Endothelial cell of umbilical vein (primary cell): ENCODE measurements at regions of chr2 and their contacts with region 1.

Region 1: DNA sequence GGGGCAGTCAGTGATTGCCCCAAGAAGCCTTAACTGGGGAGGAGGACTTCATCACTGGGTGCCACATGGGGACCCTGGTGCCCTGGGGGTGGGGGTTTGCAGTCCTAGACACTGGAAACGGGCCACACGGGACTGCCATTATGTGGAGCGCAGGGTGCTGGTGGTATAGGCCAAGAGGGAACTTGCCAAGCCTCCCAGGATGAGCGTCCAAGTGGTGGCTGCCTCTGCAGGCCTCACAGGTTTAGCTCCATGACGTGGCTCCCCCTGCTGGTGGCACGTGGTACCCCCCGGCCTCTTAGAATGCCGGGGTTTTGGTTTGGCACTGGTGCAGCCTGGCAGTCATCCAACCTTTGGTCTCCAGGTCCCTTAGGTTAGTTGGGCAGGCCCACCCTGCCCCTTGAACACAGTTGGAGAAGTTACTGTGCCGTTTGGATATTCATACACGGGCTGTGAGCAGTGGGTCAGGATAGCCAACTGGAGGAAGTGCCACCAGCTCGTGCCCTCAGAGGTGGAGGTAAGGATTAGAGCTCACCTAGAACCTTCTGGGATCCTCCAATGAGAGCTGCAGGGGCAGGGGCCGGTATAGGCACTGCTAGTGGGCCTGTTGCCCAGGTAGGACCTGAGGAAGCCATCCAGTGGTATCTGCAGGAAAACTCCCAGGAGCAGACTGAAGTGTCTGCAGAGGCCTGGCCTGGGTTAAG is 5.6 kb downstream of the PTMA start:
- DNase-seq: peak; percentile 83
- H3K4me3 ChIP-seq: no peak overlapping the region
- H3K27ac ChIP-seq: peak overlapping the region; percentile 10
- H3K4me1 ChIP-seq: peaks cover 27% of the 10 kb centered on the region
- H3K27me3 ChIP-seq: no peaks in the 10 kb centered on the region
- CTCF ChIP-seq: peak; percentile 91 to 94
- POLR2A ChIP-seq: no peak

Region 2: GRCh38 chr2:231052494-231053451 is 661.1 kb before region 1 on chr2:
- CTCF ChIA-PET with region 1: no interaction called
- POLR2A ChIA-PET with region 1: no interaction called
- dilution Hi-C with region 1: no loop called
- intact Hi-C with region 1: no loop called
- DNase-seq: peak; percentile 74
- H3K4me3 ChIP-seq: peak overlapping the region; percentile 17 to 47 (median 36)
- H3K27ac ChIP-seq: no peak overlapping the region
- H3K4me1 ChIP-seq: peaks cover 6% of the 10 kb centered on the region
- H3K27me3 ChIP-seq: peaks cover 4 to 10% of the 10 kb centered on the region in 2 experiments
- CTCF ChIP-seq: peak; percentile 95
- POLR2A ChIP-seq: no peak

Region 3: DNA sequence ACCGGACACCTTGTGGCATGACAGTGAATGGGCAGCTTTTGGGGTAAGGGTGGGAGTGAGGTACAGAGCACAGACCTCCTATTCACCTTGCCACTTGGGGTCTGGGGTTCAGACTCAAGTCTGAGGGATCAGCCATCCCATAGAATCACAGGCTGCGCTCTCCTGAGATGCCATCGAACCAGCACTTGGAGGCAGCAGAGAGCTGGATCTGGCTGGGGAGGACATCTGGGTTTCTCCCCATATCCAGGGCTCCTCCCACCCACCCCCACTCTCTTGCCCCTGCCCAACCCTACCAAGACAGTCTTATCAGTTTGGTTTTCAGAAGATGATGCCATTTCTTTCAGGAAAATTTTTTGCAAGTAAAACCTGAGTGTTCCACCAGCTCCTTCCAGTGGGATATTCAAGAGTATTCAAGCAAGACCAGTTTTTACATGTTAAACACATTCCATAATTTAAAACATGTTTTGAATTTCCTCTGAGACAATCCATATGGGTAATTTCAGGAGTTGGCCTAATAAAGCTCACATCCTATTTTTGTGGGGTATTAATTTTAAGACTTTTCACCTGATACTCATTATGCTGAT is 150.4 kb before region 1 on chr2:
- CTCF ChIA-PET with region 1: interaction called, 18 read pairs
- POLR2A ChIA-PET with region 1: no interaction called
- dilution Hi-C with region 1: no loop called
- intact Hi-C with region 1: loop called (anchors 1 kb)
- DNase-seq: peak; percentile 60
- H3K4me3 ChIP-seq: no peak overlapping the region
- H3K27ac ChIP-seq: no peak overlapping the region
- H3K4me1 ChIP-seq: no peaks in the 10 kb centered on the region
- H3K27me3 ChIP-seq: no peaks in the 10 kb centered on the region
- CTCF ChIP-seq: peak; percentile 39 to 79
- POLR2A ChIP-seq: no peak

Region 4: DNA sequence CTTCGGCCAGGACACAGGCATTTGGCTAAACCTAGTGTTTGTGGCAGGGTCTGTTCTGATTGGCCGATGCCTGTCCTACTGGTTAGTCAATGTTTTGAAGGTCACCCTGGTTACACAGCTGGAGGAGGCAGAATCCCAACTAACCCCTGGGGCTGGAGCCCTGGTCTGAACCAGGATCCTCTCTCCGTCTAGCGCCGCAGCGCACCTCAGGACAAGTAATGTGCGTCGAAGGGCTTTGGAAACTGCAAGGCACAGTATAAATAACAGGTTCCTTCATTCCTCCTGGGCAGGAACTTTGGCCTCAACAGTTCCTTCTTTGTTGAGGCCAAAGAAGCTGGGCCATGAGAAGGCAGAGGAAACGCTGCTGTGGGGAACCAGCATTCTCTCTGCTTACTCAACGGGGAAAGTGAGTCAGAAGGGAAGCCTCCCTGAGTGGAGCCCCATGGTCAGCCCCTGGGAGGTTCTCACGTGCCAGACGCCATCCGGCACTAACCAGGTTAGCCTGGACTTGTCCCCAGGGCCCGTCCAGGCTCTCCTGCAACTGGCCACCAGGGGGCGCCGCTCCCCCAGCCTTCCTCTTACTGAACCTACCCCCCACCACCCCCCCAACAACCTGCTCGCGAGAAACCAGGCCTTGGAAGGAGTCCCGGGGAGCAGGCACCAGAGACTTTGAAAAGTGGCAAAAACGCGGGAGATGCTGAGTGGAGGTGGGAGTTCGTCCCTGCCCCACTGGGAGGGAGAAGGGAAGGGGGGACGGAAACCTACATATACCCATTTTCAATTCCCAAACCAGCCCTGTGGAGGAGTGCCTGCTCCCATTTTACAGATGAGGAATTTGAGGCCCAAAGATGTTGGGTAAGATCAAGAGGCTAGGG is 101.5 kb before region 1 on chr2:
- CTCF ChIA-PET with region 1: interaction called, 139 read pairs
- POLR2A ChIA-PET with region 1: interaction called, 15 read pairs
- dilution Hi-C with region 1: no loop called
- intact Hi-C with region 1: loop called (anchors 1 kb)
- DNase-seq: peak; percentile 95
- H3K4me3 ChIP-seq: no peak overlapping the region
- H3K27ac ChIP-seq: peak overlapping the region; percentile 89
- H3K4me1 ChIP-seq: peaks cover 28% of the 10 kb centered on the region
- H3K27me3 ChIP-seq: no peaks in the 10 kb centered on the region
- CTCF ChIP-seq: peak; percentile 74 to 96
- POLR2A ChIP-seq: no peak

Region 5: DNA sequence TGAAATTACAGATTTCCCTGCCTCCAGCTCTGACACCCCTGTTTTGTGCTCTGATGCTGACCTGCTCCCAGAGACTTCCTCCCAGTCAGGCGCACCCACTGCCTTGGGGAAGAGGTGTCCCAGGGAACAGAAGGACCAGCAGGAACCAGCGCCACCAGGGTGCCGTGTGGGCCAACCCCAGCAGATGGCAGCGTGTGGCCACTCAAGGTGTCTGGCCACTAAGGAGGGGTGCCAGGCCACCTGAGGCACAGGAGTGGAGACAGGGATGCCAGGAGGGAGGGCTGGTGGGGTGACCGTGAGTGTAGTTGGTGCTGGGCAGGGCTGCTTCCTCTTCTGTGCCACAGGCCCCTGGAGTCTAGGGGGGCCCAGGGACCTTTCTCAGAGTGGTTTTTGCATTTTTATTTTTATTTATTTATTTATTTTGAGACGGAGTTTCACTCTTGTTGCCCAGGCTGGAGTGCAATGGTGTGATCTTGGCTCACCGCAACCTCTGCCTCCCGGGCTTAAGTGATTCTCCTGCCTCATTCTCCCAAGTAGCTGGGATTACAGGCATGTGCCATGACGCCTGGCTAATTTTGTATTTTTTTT is 65.2 kb before region 1 on chr2:
- CTCF ChIA-PET with region 1: interaction called, 30 read pairs
- POLR2A ChIA-PET with region 1: no interaction called
- dilution Hi-C with region 1: no loop called
- intact Hi-C with region 1: loop called (anchors 1 kb)
- DNase-seq: peak; percentile 65
- H3K4me3 ChIP-seq: no peak overlapping the region
- H3K27ac ChIP-seq: no peak overlapping the region
- H3K4me1 ChIP-seq: peaks cover under 1% of the 10 kb centered on the region
- H3K27me3 ChIP-seq: no peaks in the 10 kb centered on the region
- CTCF ChIP-seq: peak; percentile 72 to 85
- POLR2A ChIP-seq: no peak

Region 6: DNA sequence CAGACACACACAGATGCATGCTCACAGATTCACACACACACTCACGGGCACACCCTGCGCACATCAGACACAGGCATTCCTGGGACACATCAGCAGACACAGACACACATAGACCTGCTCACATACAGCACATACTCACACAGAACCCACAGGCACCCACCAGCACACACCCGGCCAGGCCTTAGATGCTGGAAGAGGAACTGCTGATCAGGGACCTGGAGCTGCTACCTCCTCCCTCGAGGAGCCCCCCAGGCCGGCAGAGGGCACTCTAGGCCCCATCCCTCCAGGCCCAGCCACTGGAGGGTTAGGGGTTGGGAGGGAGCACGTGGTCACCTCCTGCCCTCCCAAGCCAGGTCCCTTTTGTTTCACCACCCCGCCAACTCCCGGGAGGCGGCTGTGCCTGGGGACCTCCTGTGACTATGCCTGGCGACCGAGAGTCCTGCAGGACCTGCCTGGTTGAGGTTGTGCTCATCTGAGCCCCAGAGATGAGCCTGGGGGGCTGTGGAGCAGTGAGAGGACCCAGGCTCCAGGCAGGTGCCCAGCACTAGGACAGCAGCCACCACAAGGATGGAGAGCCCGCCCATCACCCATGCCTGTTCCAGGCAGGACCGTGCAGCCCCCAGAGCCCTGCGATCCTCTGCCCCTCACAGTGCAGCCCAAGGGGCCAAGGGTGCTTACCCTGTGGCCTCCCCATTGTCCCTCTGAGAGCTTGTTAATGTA is 26.6 kb before region 1 on chr2:
- CTCF ChIA-PET with region 1: interaction called, 107 read pairs
- POLR2A ChIA-PET with region 1: no interaction called
- dilution Hi-C with region 1: no loop called
- intact Hi-C with region 1: loop called (anchors 1 kb)
- DNase-seq: peak; percentile 54
- H3K4me3 ChIP-seq: no peak overlapping the region
- H3K27ac ChIP-seq: no peak overlapping the region
- H3K4me1 ChIP-seq: no peaks in the 10 kb centered on the region
- H3K27me3 ChIP-seq: no peaks in the 10 kb centered on the region
- CTCF ChIP-seq: peak; percentile 60 to 82
- POLR2A ChIP-seq: no peak

Region 7: DNA sequence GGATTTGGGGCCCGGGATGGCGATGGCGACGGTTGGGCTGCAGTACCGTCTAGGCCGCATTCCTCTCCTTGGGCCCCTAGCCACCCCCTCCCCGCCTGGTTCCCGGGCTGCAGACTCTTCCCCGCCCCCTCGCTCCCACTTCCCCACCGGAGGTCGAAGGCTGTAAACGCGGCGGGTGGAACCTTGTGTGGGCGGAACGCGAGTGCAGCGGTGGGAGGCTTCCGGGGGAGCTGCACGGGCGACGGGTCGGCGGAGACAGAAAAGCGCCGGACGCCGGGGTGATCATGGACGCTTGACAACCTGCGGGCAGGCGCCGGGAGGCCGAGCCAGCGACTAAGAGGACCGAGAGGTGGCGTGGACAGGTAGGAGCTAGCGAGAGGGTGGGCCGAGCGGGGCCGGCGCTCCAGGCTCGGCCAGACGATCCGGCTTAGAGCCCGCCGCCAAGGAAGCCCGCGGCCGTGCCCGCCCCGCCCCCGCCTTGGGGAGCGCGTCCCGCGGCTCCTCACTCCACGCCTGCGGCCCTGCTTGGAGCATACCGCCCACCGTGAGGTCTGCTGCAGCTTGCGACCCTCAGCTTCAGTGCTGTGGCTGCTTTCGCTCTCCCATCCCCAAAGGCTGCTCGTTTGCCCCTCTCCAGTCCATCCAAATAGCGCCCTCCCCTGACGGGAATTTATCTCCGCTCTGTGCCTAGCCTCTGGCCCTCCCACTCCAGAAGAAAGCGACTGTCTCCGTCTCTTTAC is 72.5 kb after region 1 on chr2 and contains the start of gene COPS7B:
- CTCF ChIA-PET with region 1: interaction called, 17 read pairs
- POLR2A ChIA-PET with region 1: no interaction called
- dilution Hi-C with region 1: no loop called
- intact Hi-C with region 1: no loop called
- DNase-seq: peak; percentile 85
- H3K4me3 ChIP-seq: peak within 1 kb of the TSS; percentile 46 to 84 (median 64)
- H3K27ac ChIP-seq: peak within 1 kb of the TSS; percentile 53
- H3K4me1 ChIP-seq: peaks cover 27% of the 10 kb centered on the region
- H3K27me3 ChIP-seq: no peaks in the 10 kb centered on the region
- CTCF ChIP-seq: peak; percentile 34 to 42
- POLR2A ChIP-seq: peak; percentile 69
- total RNA-seq, gene COPS7B: 42.4 and 50.3 TPM in 2 replicates